ENCODE measurements at regions of chr11 and their contacts with region 1.

Region 1: DNA sequence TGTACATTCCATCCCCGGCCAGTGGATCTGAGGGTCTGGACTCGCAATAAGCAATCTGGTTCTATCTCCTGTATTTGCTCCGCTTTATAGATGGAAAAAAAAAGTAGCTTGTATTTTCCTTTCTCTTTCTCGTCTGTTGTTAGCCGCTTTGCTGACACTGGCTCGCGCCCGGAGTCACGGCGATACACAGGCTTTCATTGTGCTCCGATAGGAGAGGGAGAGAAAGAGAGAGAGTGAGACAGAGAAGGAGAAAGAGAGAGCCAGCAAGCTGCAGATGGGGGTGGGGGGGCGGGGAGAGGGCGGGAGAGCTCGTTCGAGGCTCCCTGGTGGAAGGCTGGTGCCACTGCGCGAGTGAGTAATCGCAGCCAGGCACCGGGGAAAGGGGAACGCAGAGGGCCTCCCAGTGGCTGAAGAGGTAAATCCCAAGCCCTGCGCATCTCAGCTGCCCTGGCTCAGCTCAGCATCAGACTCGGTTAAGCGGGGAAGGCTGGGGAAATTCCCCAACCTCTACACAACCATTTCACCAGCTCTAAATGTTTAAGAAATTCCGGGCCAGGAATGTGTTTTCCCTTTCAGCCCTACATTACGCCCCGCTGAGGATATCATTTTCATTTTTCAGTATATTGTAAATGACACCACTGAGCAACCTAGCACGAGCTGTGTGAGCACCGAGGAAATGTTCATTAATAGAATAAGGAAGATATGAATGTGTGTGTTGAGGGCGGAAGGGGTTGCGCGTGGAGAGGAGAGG is at the start of gene MAML2:
- DNase-seq: peak; percentile 95
- ATAC-seq: peak; percentile 82
- H3K4me3 Mint-ChIP-seq: peak within 1 kb of the TSS; percentile 92
- H3K27ac Mint-ChIP-seq: peak within 1 kb of the TSS; percentile 92
- H3K4me1 Mint-ChIP-seq: peaks cover 33% of the 10 kb centered on the region
- H3K27me3 Mint-ChIP-seq: no peaks in the 10 kb centered on the region
- total RNA-seq, gene MAML2: 12.7 to 14.5 TPM

Region 2: GRCh38 chr11:96054870-96055705 is 288.0 kb before region 1 on chr11:
- CTCF ChIA-PET with region 1: interaction called, 82 read pairs
- DNase-seq: no peak
- ATAC-seq: peak; percentile 61
- H3K4me3 Mint-ChIP-seq: no peak overlapping the region
- H3K27ac Mint-ChIP-seq: no peak overlapping the region
- H3K4me1 Mint-ChIP-seq: peaks cover 40% of the 10 kb centered on the region
- H3K27me3 Mint-ChIP-seq: no peaks in the 10 kb centered on the region

Region 3: DNA sequence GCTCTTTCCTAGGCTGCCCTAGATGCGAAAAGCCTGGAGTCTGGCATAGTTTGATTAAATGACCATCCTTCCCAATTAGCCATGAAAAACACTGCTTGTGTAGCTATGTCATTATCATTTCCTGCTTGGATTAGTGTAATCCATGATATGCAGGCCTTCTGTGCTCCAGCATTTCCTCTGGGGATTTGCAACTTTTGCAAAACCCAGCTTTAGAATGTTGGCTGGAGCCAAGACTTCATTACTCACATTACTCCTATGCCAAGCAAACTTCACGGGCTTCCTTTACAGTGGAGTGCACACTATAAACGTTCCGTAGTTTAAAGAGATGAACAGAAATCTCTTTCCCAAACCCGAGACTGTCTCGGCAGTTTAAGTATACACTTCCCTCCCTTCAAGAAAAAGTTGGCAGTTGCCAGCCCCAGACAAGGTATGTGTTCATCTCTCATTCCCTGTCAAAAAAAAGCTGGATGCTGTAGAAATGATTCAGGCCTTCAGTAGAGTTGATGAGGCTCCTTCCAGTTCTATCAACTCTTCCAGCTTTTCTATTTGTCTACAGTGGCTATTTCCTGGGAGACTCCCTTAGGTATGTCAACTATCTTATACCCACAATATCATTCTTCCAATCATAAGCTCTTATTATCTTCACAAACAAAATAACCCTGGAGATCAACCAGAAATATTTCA is 180.2 kb before region 1 on chr11:
- CTCF ChIA-PET with region 1: interaction called, 12 read pairs
- DNase-seq: no peak
- ATAC-seq: no peak
- H3K4me3 Mint-ChIP-seq: no peak overlapping the region
- H3K27ac Mint-ChIP-seq: no peak overlapping the region
- H3K4me1 Mint-ChIP-seq: peaks cover 20% of the 10 kb centered on the region
- H3K27me3 Mint-ChIP-seq: no peaks in the 10 kb centered on the region

Region 4: GRCh38 chr11:96235751-96236150 is 107.4 kb before region 1 on chr11:
- CTCF ChIA-PET with region 1: interaction called, 34 read pairs
- DNase-seq: peak; percentile 88
- ATAC-seq: peak; percentile 98
- H3K4me3 Mint-ChIP-seq: peak overlapping the region; percentile 62
- H3K27ac Mint-ChIP-seq: peak overlapping the region; percentile 91
- H3K4me1 Mint-ChIP-seq: peaks cover 41% of the 10 kb centered on the region
- H3K27me3 Mint-ChIP-seq: no peaks in the 10 kb centered on the region

Region 5: GRCh38 chr11:96279018-96279895 is 63.9 kb before region 1 on chr11:
- CTCF ChIA-PET with region 1: interaction called, 13 read pairs
- DNase-seq: no peak
- ATAC-seq: peak; percentile 36
- H3K4me3 Mint-ChIP-seq: no peak overlapping the region
- H3K27ac Mint-ChIP-seq: no peak overlapping the region
- H3K4me1 Mint-ChIP-seq: peaks cover 35% of the 10 kb centered on the region
- H3K27me3 Mint-ChIP-seq: no peaks in the 10 kb centered on the region

Region 6: GRCh38 chr11:96357794-96358193 is 14.7 kb after region 1 on chr11:
- CTCF ChIA-PET with region 1: interaction called, 20 read pairs
- DNase-seq: peak; percentile 55
- ATAC-seq: peak; percentile 87
- H3K4me3 Mint-ChIP-seq: peak overlapping the region; percentile 9
- H3K27ac Mint-ChIP-seq: peak overlapping the region; percentile 70
- H3K4me1 Mint-ChIP-seq: peaks cover 32% of the 10 kb centered on the region
- H3K27me3 Mint-ChIP-seq: no peaks in the 10 kb centered on the region

Region 7: GRCh38 chr11:96456111-96456510 is 113.0 kb after region 1 on chr11:
- CTCF ChIA-PET with region 1: no interaction called
- DNase-seq: no peak
- ATAC-seq: no peak
- H3K4me3 Mint-ChIP-seq: no peak overlapping the region
- H3K27ac Mint-ChIP-seq: no peak overlapping the region
- H3K4me1 Mint-ChIP-seq: no peaks in the 10 kb centered on the region
- H3K27me3 Mint-ChIP-seq: peaks cover 11% of the 10 kb centered on the region